ENCODE measurements at regions of chr6 and their contacts with region 1.

Region 1: GRCh38 chr6:96626759-96627364 is 63.9 kb downstream of the FHL5 start:
- DNase-seq: no peak
- ATAC-seq: peak; percentile 77 to 91 (median 88)
- H3K4me3 ChIP-seq: no peak overlapping the region
- H3K27ac ChIP-seq: no peak overlapping the region
- H3K4me1 ChIP-seq: no peaks in the 10 kb centered on the region
- H3K27me3 ChIP-seq: peaks cover 0 to 2% (median 0%) of the 10 kb centered on the region in 4 donors
- CTCF ChIP-seq: peak in 1 of 4 donors; percentile 38

Region 2: GRCh38 chr6:96257751-96258150 is 369.1 kb before region 1 on chr6:
- intact Hi-C with region 1: no loop called
- DNase-seq: no peak
- ATAC-seq: no peak
- H3K4me3 ChIP-seq: no peak overlapping the region
- H3K27ac ChIP-seq: no peak overlapping the region
- H3K4me1 ChIP-seq: no peaks in the 10 kb centered on the region
- H3K27me3 ChIP-seq: no peaks in the 10 kb centered on the region
- CTCF ChIP-seq: no peak

Region 3: DNA sequence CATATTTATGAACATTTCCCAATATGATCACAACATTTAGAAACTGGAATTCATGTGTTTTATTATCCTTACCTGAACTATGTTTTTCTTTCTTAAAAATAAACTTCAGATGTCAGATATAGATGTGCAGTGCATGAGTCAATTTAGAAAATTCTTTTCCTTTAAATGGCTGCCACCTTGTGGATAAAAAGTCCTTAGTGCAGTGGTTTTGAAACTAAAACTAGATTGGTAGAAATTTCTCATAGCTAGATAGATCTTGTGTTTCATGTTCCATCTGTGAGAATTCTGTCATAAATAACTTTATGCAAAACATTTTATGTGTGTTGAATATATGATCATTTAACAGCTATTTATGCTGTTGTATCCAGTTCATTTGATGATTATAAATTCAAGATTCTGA is 432.6 kb after region 1 on chr6:
- intact Hi-C with region 1: loop called in 2 of 3 experiments (anchors 10 kb)
- DNase-seq: no peak
- ATAC-seq: peak in 3 of 4 donors; percentile 46 to 69 (median 53)
- H3K4me3 ChIP-seq: no peak overlapping the region
- H3K27ac ChIP-seq: no peak overlapping the region
- H3K4me1 ChIP-seq: no peaks in the 10 kb centered on the region
- H3K27me3 ChIP-seq: no peaks in the 10 kb centered on the region
- CTCF ChIP-seq: peak in 3 of 4 donors; percentile 22 to 41 (median 27)

Region 4: GRCh38 chr6:97068211-97068610 is 441.3 kb after region 1 on chr6:
- intact Hi-C with region 1: loop called in 1 of 3 experiments (anchors 10 kb)
- DNase-seq: no peak
- ATAC-seq: no peak
- H3K4me3 ChIP-seq: no peak overlapping the region
- H3K27ac ChIP-seq: no peak overlapping the region
- H3K4me1 ChIP-seq: no peaks in the 10 kb centered on the region
- H3K27me3 ChIP-seq: no peaks in the 10 kb centered on the region
- CTCF ChIP-seq: peak in 1 of 4 donors; percentile 18